Caco-2 (cell line): ENCODE measurements at regions of chr7 and their contacts with region 1.

Region 1: DNA sequence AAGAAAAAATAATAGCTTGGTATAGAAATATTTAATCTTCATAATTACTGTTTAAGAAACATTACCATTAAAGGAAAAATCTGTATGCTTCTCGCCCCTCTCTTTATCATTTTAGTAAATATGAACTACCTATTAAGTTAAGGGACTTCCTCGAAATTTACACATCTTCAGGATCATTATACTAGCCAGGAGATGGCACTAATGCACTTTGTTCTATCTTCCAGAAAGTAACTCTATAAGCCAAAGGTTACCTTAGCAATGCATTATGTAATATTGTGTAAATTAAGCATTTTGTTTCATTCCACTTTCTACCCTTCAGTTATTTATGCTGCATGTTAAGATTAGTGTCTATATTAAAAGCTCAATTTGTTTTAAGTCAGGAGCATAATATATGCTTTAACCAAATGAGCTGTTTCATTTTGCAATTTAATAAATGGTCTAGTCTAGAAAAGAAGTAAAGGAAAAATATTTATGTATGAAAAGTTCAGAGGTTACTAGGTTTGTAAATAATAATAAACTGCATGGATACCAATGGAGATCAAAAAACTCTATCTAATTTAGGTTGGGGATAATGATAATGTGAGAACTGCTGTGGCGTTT is 128.4 kb downstream of the ANKRD7 start:
- DNase-seq: peak in 1 of 2 experiments; percentile 36
- H3K4me3 ChIP-seq: no peak overlapping the region
- H3K4me3 Mint-ChIP-seq: no peak overlapping the region
- H3K27ac Mint-ChIP-seq: no peak overlapping the region
- H3K4me1 ChIP-seq: no peaks in the 10 kb centered on the region
- H3K4me1 Mint-ChIP-seq: no peaks in the 10 kb centered on the region
- H3K27me3 ChIP-seq: no peaks in the 10 kb centered on the region
- H3K27me3 Mint-ChIP-seq: no peaks in the 10 kb centered on the region
- CTCF ChIP-seq: peak; percentile 34 to 43

Region 2: GRCh38 chr7:118436663-118437062 is 83.7 kb after region 1 on chr7:
- CTCF ChIA-PET with region 1: no interaction called
- POLR2A ChIA-PET with region 1: no interaction called
- intact Hi-C with region 1: loop called (anchors 1 kb)
- DNase-seq: no peak
- H3K4me3 ChIP-seq: no peak overlapping the region
- H3K4me3 Mint-ChIP-seq: no peak overlapping the region
- H3K27ac Mint-ChIP-seq: no peak overlapping the region
- H3K4me1 ChIP-seq: no peaks in the 10 kb centered on the region
- H3K4me1 Mint-ChIP-seq: no peaks in the 10 kb centered on the region
- H3K27me3 ChIP-seq: no peaks in the 10 kb centered on the region
- H3K27me3 Mint-ChIP-seq: peaks cover 4% of the 10 kb centered on the region
- CTCF ChIP-seq: no peak

Region 3: GRCh38 chr7:118492466-118492865 is 139.5 kb after region 1 on chr7:
- CTCF ChIA-PET with region 1: no interaction called
- POLR2A ChIA-PET with region 1: no interaction called
- intact Hi-C with region 1: no loop called
- DNase-seq: no peak
- H3K4me3 ChIP-seq: no peak overlapping the region
- H3K4me3 Mint-ChIP-seq: no peak overlapping the region
- H3K27ac Mint-ChIP-seq: no peak overlapping the region
- H3K4me1 ChIP-seq: no peaks in the 10 kb centered on the region
- H3K4me1 Mint-ChIP-seq: no peaks in the 10 kb centered on the region
- H3K27me3 ChIP-seq: no peaks in the 10 kb centered on the region
- H3K27me3 Mint-ChIP-seq: no peaks in the 10 kb centered on the region
- CTCF ChIP-seq: no peak

Region 4: DNA sequence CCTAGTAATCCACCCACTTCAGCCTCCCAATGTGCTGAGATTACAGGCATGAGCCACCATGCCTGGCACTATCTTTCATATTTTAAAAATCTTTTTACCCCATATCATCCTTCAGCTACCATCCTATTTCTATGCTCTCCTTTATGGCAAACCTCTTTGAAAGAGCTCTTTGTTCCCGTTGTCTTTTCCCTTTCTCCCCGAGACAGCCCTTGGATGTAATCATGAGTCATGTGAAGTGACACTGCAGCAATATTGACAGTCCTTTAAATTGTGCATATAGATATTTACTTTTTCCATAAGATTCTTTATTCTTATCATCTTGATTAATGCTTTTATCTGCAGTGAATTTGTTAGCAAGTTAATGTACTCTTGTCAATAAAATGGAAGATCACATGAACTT is 158.2 kb after region 1 on chr7:
- CTCF ChIA-PET with region 1: no interaction called
- POLR2A ChIA-PET with region 1: no interaction called
- intact Hi-C with region 1: loop called (anchors 5 kb)
- DNase-seq: no peak
- H3K4me3 ChIP-seq: no peak overlapping the region
- H3K4me3 Mint-ChIP-seq: no peak overlapping the region
- H3K27ac Mint-ChIP-seq: no peak overlapping the region
- H3K4me1 ChIP-seq: no peaks in the 10 kb centered on the region
- H3K4me1 Mint-ChIP-seq: no peaks in the 10 kb centered on the region
- H3K27me3 ChIP-seq: no peaks in the 10 kb centered on the region
- H3K27me3 Mint-ChIP-seq: no peaks in the 10 kb centered on the region
- CTCF ChIP-seq: no peak

Region 5: DNA sequence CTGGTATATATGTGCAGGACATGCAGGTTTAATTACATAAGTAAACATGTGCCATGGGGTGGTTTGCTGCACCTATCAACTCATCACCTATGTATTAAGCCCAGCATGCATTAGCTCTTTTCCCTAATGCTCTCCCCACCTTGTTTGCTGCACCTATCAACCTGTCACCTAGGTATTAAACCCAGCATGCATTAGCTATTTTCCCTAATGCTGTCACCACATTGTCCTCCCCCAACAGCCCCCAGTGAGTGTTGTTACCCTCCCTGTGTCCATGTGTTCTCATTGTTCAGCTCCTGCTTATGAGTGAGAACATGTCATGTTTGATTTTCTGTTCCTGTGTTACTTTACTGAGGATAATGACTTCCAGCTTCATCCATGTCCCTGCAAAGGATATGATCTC is 172.1 kb after region 1 on chr7:
- CTCF ChIA-PET with region 1: no interaction called
- POLR2A ChIA-PET with region 1: no interaction called
- intact Hi-C with region 1: no loop called
- DNase-seq: no peak
- H3K4me3 ChIP-seq: no peak overlapping the region
- H3K4me3 Mint-ChIP-seq: no peak overlapping the region
- H3K27ac Mint-ChIP-seq: no peak overlapping the region
- H3K4me1 ChIP-seq: no peaks in the 10 kb centered on the region
- H3K4me1 Mint-ChIP-seq: no peaks in the 10 kb centered on the region
- H3K27me3 ChIP-seq: no peaks in the 10 kb centered on the region
- H3K27me3 Mint-ChIP-seq: no peaks in the 10 kb centered on the region
- CTCF ChIP-seq: no peak

Region 6: DNA sequence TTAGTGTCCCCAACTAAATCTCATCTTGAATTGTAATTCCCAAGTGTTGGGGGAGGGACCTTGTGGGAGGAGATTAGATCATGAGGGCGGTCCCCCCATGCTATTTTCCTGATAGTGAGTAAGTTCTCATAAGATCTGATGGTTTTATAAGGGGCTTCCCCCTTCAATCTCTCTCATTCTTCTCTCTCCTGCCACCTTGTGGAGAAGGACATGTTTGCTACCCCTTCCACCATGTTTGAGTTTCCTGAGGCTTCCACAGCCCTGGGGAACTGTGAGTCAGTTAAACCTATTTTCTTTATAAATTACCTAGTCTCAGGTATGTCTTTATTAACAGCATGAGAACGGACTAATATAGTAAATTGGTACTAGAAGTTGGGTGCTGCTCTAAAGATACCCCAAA is 237.2 kb after region 1 on chr7:
- CTCF ChIA-PET with region 1: no interaction called
- POLR2A ChIA-PET with region 1: no interaction called
- intact Hi-C with region 1: loop called (anchors 1 kb)
- DNase-seq: peak in 1 of 2 experiments; percentile 17
- H3K4me3 ChIP-seq: no peak overlapping the region
- H3K4me3 Mint-ChIP-seq: no peak overlapping the region
- H3K27ac Mint-ChIP-seq: no peak overlapping the region
- H3K4me1 ChIP-seq: no peaks in the 10 kb centered on the region
- H3K4me1 Mint-ChIP-seq: no peaks in the 10 kb centered on the region
- H3K27me3 ChIP-seq: no peaks in the 10 kb centered on the region
- H3K27me3 Mint-ChIP-seq: no peaks in the 10 kb centered on the region
- CTCF ChIP-seq: peak; percentile 27 to 42

Region 7: GRCh38 chr7:118731854-118732253 is 378.9 kb after region 1 on chr7:
- CTCF ChIA-PET with region 1: no interaction called
- POLR2A ChIA-PET with region 1: no interaction called
- intact Hi-C with region 1: loop called (anchors 1 kb)
- DNase-seq: peak in 1 of 2 experiments; percentile 5
- H3K4me3 ChIP-seq: no peak overlapping the region
- H3K4me3 Mint-ChIP-seq: no peak overlapping the region
- H3K27ac Mint-ChIP-seq: no peak overlapping the region
- H3K4me1 ChIP-seq: no peaks in the 10 kb centered on the region
- H3K4me1 Mint-ChIP-seq: no peaks in the 10 kb centered on the region
- H3K27me3 ChIP-seq: no peaks in the 10 kb centered on the region
- H3K27me3 Mint-ChIP-seq: no peaks in the 10 kb centered on the region
- CTCF ChIP-seq: peak in 1 of 2 experiments; percentile 16

Region 8: GRCh38 chr7:119197877-119198527 is 845.0 kb after region 1 on chr7:
- CTCF ChIA-PET with region 1: interaction called, 3 read pairs
- POLR2A ChIA-PET with region 1: no interaction called
- intact Hi-C with region 1: loop called (anchors 5 kb)
- DNase-seq: peak; percentile 57 to 65
- H3K4me3 ChIP-seq: no peak overlapping the region
- H3K4me3 Mint-ChIP-seq: no peak overlapping the region
- H3K27ac Mint-ChIP-seq: no peak overlapping the region
- H3K4me1 ChIP-seq: no peaks in the 10 kb centered on the region
- H3K4me1 Mint-ChIP-seq: no peaks in the 10 kb centered on the region
- H3K27me3 ChIP-seq: no peaks in the 10 kb centered on the region
- H3K27me3 Mint-ChIP-seq: no peaks in the 10 kb centered on the region
- CTCF ChIP-seq: peak; percentile 81 to 87